WTC11 (cell line): ENCODE measurements at regions of chr19 and their contacts with region 1.

Region 1: GRCh38 chr19:29665215-29665825 is at the start of gene PLEKHF1:
- DNase-seq: peak; percentile 90
- ATAC-seq: peak; percentile 77
- H3K4me3 Mint-ChIP-seq: peak within 1 kb of the TSS; percentile 77
- H3K27ac Mint-ChIP-seq: peak within 1 kb of the TSS; percentile 98
- H3K4me1 Mint-ChIP-seq: peaks cover 37% of the 10 kb centered on the region
- H3K27me3 Mint-ChIP-seq: no peaks in the 10 kb centered on the region
- CTCF ChIP-seq: no peak
- total RNA-seq, gene PLEKHF1: 10.8 to 17.9 TPM (median 14.0 TPM) in 3 replicates

Region 2: DNA sequence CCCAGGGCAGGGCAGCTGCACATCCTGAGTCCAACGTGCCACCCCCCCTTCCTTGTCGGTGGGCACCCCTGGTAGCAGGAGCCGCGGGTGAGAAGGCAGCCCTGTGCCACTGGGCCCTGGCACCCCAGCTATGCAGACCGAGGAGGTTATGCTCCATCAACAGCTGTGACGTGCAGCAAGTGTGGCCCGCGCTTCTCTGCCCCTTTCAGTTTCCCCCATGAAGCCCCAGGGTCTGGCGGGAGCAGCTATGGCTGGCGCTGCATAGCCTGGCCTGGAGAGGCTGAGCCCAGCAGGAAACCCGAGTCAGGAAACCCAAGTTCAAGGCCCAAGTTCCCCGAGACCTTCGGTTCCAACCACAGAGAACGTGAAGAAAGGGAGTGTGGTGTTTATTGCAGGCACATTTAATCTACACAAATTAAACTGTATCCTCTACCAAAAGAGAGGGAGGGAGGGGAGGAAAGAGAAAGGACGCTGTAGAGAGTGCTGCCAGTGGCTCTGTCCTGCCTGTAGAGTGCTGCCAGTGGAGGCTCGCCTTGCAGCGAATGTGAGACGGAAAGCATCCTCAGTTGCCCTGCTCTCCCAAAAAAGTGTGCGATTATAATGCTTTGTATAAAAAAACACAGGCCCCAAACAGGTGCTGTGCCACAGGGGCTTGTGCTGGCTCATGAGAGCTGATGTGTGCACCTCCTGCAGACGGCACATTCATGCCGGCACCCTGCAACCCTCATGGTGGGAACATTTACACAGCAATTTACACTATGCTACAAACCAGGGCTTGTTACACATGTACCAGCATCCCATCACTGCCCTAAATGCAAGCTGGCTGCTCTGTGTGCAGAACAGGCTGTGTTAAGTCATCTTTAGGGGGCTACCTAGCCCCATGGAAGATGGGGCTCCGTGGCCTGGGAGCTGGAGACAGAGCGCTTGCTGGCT is 42.9 kb before region 1 on chr19:
- CTCF ChIA-PET with region 1: interaction called, 18 read pairs
- POLR2A ChIA-PET with region 1: interaction called, 3 read pairs
- DNase-seq: no peak
- ATAC-seq: no peak
- H3K4me3 Mint-ChIP-seq: no peak overlapping the region
- H3K27ac Mint-ChIP-seq: no peak overlapping the region
- H3K4me1 Mint-ChIP-seq: peaks cover 8% of the 10 kb centered on the region
- H3K27me3 Mint-ChIP-seq: no peaks in the 10 kb centered on the region; the same call in 1 of the 2 replicates
- CTCF ChIP-seq: no peak

Region 3: DNA sequence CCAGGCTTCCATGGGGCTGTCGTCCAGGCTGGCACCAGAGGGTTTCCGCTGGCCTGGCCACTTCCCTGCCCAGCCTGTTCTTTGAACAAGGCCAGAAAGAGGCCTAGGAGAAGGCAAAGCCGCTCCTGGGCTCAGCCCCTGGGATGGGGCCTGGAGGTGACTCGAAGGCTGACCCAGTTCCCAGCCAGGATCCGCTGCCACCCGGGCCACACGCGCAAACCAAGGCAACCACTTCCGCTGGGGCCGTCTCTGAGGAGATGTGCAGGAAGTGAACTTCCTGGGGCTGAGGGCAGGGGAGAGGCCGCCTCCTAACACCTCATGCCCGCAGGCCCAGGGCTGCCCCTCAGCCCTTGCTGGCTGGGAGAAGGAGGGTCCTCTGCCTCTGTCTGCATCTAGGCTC is 15.1 kb after region 1 on chr19:
- CTCF ChIA-PET with region 1: interaction called, 14 read pairs
- POLR2A ChIA-PET with region 1: interaction called, 3 read pairs
- DNase-seq: no peak
- ATAC-seq: no peak
- H3K4me3 Mint-ChIP-seq: no peak overlapping the region
- H3K27ac Mint-ChIP-seq: no peak overlapping the region
- H3K4me1 Mint-ChIP-seq: peaks cover 5% of the 10 kb centered on the region
- H3K27me3 Mint-ChIP-seq: no peaks in the 10 kb centered on the region
- CTCF ChIP-seq: no peak

Region 4: DNA sequence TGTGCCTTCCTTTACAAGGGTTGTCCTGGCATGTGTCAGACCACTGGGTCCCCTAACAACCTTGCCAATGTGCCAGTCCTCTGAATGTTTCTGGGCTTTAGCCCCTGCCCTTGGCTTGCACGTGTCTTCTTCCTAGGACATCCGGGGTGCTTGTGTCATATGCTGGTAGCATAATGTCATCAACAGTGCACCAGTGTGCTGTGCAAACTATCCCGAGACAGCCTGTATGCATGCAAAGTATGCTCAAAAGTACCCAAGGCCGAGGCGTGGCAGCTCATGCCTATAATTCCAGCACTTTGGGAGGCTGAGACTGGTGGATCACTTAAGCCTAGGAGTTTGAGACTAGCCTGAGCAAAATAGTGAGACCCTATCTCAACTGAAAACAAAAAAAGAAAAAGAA is 70.5 kb after region 1 on chr19:
- CTCF ChIA-PET with region 1: interaction called, 11 read pairs
- POLR2A ChIA-PET with region 1: no interaction called
- DNase-seq: no peak
- ATAC-seq: no peak
- H3K4me3 Mint-ChIP-seq: no peak overlapping the region
- H3K27ac Mint-ChIP-seq: no peak overlapping the region
- H3K4me1 Mint-ChIP-seq: no peaks in the 10 kb centered on the region
- H3K27me3 Mint-ChIP-seq: no peaks in the 10 kb centered on the region
- CTCF ChIP-seq: no peak